Astrocyte of the cerebellum (primary cell): ENCODE measurements at regions of chr16 and their contacts with region 1.

Region 1: GRCh38 chr16:16143038-16143763 is 80.1 kb downstream of the ABCC6 start:
- DNase-seq: no peak
- H3K4me3 ChIP-seq: no peak overlapping the region
- CTCF ChIP-seq: peak; percentile 37

Region 2: GRCh38 chr16:16189842-16190241 is 46.6 kb after region 1 on chr16:
- in situ Hi-C with region 1: loop called (anchors 5 kb)
- DNase-seq: no peak
- H3K4me3 ChIP-seq: no peak overlapping the region
- CTCF ChIP-seq: no peak